Aorta (tissue), 5 donors: ENCODE measurements at regions of chr18 and their contacts with region 1.

Region 1: GRCh38 chr18:76803814-76804213 is 18.5 kb upstream of the ZNF236 start:
- DNase-seq: peak in 1 of 2 donors; percentile 63
- ATAC-seq: peak; percentile 55
- H3K4me3 ChIP-seq: no peak overlapping the region
- H3K27ac ChIP-seq: no peak overlapping the region
- H3K4me1 ChIP-seq: no peaks in the 10 kb centered on the region
- H3K27me3 ChIP-seq: no peaks in the 10 kb centered on the region

Region 2: DNA sequence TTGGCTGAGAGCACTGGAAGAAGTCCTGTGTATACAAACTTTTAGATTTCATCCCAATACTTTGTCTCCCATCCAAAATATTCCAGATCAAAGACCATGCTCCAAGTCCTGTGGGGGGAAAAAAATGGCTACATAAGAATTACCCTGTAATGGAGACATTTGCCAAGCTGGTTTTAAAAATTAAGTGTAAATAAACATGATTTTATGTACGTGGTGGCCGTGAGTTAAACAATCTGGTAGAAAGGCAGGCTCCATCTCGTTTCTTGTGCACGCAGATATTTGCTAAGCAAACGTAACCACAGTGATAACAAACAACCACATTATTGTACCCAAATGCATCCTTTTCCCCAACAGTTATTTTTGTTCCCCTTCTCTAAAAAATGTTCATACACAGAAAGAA is 485.2 kb before region 1 on chr18:
- intact Hi-C with region 1: no loop called
- DNase-seq: no peak
- ATAC-seq: no peak
- H3K4me3 ChIP-seq: no peak overlapping the region
- H3K27ac ChIP-seq: no peak overlapping the region
- H3K4me1 ChIP-seq: no peaks in the 10 kb centered on the region
- H3K27me3 ChIP-seq: no peaks in the 10 kb centered on the region

Region 3: GRCh38 chr18:76875390-76876325 is 71.8 kb after region 1 on chr18:
- intact Hi-C with region 1: loop called (anchors 5 to 10 kb)
- DNase-seq: no peak
- ATAC-seq: no peak
- H3K4me3 ChIP-seq: no peak overlapping the region
- H3K27ac ChIP-seq: no peak overlapping the region
- H3K4me1 ChIP-seq: no peaks in the 10 kb centered on the region
- H3K27me3 ChIP-seq: no peaks in the 10 kb centered on the region

Region 4: GRCh38 chr18:76922107-76922506 is 118.3 kb after region 1 on chr18:
- intact Hi-C with region 1: loop called (anchors 5 to 10 kb)
- DNase-seq: peak in 1 of 2 donors; percentile 64
- ATAC-seq: peak; percentile 68
- H3K4me3 ChIP-seq: no peak overlapping the region
- H3K27ac ChIP-seq: no peak overlapping the region
- H3K4me1 ChIP-seq: no peaks in the 10 kb centered on the region
- H3K27me3 ChIP-seq: no peaks in the 10 kb centered on the region

Region 5: DNA sequence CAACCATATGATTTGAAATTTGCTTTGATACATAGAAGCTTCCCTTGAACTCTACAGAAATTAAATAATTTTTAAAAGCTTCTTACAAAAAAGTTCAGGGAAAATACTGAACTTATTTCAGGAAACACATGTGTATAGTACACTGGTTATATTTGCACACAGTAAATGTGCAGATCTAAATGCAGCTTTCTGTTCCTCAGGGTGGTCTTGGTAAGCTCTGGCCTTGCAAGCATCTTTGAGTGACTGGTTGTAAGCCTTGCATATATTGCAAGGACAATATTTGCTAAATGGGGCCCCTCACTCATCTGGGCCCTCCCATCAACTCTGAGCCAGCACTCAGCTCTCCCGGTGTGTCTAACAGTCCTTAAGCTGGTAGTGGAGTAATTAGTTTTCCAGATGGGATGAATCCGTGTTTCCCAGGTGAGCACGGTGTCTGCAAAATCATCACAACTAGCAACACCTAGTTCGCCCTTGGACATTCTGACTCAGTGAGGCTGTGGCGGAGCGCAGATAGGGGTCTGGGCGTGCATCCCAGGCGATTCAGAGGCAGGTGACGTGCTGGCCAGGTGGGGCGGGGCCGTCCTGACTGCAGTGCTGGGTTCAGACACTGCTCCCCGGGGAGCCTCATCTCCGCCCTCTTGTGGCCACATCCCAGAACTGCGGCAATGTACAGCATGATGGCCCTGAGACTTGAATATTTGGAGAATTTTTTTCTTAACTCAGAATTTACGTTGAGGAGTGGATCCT is 179.2 kb after region 1 on chr18:
- intact Hi-C with region 1: loop called (anchors 2 to 5 kb)
- DNase-seq: peak; percentile 90 to 93
- ATAC-seq: peak; percentile 83
- H3K4me3 ChIP-seq: no peak overlapping the region
- H3K27ac ChIP-seq: no peak overlapping the region
- H3K4me1 ChIP-seq: no peaks in the 10 kb centered on the region
- H3K27me3 ChIP-seq: no peaks in the 10 kb centered on the region